Gastrocnemius medialis (tissue), 4 donors: ENCODE measurements at regions of chr4 and their contacts with region 1.

Region 1: GRCh38 chr4:11765849-11766453 is 337.3 kb upstream of the HS3ST1 start:
- DNase-seq: no peak
- ATAC-seq: no peak
- H3K4me3 ChIP-seq: no peak overlapping the region
- H3K27ac ChIP-seq: no peak overlapping the region
- H3K4me1 ChIP-seq: no peaks in the 10 kb centered on the region
- H3K27me3 ChIP-seq: no peaks in the 10 kb centered on the region
- CTCF ChIP-seq: peak in 2 of 5 experiments; percentile 37 to 45
- POLR2A ChIP-seq: no peak

Region 2: DNA sequence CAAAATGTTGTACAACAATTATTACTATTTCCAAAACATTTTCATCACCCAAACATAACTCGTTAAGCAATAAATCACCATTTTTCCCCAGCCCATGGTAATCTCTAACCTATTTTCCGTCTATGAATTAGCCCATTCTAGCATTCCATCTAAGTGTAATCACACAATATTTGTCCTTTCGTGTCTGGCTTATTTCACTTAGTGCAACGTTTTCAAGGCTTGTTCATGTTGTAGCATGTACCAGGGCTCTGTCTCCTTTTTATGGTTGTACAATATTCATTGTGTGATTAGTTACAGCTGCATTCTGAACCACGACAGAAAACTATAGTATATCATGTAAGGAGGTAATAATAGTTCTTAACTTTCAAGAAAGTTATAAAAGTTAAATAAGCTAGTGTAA is 318.7 kb after region 1 on chr4:
- in situ Hi-C with region 1: no loop called
- intact Hi-C with region 1: no loop called
- DNase-seq: no peak
- ATAC-seq: no peak
- H3K4me3 ChIP-seq: no peak overlapping the region
- H3K27ac ChIP-seq: no peak overlapping the region
- H3K4me1 ChIP-seq: no peaks in the 10 kb centered on the region
- H3K27me3 ChIP-seq: no peaks in the 10 kb centered on the region
- CTCF ChIP-seq: no peak
- POLR2A ChIP-seq: no peak

Region 3: GRCh38 chr4:12239897-12240636 is 474.1 kb after region 1 on chr4:
- in situ Hi-C with region 1: no loop called
- intact Hi-C with region 1: no loop called
- DNase-seq: no peak
- ATAC-seq: no peak
- H3K4me3 ChIP-seq: no peak overlapping the region
- H3K27ac ChIP-seq: no peak overlapping the region
- H3K4me1 ChIP-seq: no peaks in the 10 kb centered on the region
- H3K27me3 ChIP-seq: no peaks in the 10 kb centered on the region
- CTCF ChIP-seq: no peak
- POLR2A ChIP-seq: no peak

Region 4: DNA sequence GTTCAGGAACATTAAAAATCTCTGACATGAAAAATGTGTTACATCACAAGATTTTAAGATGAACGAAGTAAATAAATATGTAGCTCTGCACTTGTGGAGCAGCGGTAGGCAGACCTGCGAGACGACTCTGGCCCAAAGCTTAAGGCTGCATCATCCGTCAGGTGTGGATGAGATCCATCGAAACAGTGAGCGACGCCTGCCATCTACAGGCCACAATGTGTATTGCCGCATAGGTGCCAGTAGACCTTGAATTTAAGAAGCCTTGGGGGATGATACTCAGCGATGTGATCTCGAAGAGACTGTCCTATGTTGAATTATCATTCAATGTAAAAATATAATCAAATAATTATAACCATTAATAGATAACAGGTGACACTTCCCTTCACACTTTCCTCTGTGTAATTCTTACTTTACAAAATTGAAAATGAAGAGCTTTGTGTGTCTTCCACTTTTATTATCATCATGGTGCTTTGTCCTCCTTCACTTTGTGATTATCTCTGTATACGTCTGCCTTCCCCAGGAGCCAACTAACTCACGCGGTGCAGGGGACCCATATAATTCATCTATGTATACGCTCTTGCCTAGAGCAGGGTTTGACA is 867.2 kb after region 1 on chr4:
- in situ Hi-C with region 1: loop called in 1 of 4 experiments (anchors 25 kb)
- intact Hi-C with region 1: no loop called
- DNase-seq: peak; percentile 8 to 15
- ATAC-seq: peak in 1 of 2 donors; percentile 27
- H3K4me3 ChIP-seq: no peak overlapping the region
- H3K27ac ChIP-seq: no peak overlapping the region
- H3K4me1 ChIP-seq: no peaks in the 10 kb centered on the region
- H3K27me3 ChIP-seq: no peaks in the 10 kb centered on the region
- CTCF ChIP-seq: peak in 4 of 5 experiments; percentile 50 to 71 (median 58)
- POLR2A ChIP-seq: no peak